ENCODE measurements at regions of chr4 and their contacts with region 1.

Region 1: DNA sequence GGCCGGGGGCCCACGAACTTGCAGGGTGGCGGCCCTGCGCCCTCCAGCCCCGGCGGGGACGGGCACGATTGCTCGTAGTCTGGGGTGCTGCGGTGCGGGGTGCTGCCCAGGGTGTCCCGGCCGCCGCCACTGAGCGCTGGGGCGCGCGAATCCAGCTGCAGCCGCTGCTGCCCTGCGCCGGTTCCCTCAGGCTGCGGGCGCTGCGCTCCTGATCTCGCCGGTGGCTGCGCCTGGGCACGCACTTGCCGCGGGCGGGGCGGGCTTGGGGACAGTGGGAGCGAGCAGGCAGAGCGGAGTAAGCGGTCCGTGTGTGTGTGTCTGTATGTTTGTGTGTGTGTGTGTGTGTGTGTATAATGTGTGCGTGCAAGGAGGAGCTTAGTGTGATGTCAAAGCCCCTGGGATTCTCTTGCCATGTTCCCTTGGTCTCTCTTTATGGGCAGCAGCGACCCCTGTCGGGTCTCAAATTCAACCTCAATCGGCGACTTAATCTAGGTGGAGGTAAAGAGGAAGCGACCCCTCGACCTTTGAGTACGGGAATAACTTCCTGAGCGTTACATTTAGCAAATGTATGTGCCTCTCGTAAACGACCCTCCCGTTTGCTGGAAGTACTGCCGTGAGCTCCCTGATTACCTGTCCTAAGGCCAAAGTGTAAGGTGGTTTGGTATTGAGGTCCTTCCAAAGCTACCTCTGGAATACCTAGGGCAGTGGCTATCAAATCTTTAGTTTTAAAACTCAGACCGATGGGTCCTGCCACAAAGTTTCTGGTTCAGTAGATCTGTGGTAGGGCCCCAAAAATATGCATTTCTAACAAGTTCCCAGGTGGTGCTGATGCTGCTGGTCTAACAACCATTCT is at the start of gene RNF150:
- DNase-seq: peak; percentile 67 to 86
- H3K4me3 ChIP-seq: peak within 1 kb of the TSS; percentile 70 to 71
- H3K27ac ChIP-seq: peak within 1 kb of the TSS; percentile 70 to 74
- H3K4me1 ChIP-seq: peaks cover 0 to 34% (median 4%) of the 10 kb centered on the region in 4 donors
- H3K27me3 ChIP-seq: no peaks in the 10 kb centered on the region
- CTCF ChIP-seq: peak; percentile 69 to 77

Region 2: DNA sequence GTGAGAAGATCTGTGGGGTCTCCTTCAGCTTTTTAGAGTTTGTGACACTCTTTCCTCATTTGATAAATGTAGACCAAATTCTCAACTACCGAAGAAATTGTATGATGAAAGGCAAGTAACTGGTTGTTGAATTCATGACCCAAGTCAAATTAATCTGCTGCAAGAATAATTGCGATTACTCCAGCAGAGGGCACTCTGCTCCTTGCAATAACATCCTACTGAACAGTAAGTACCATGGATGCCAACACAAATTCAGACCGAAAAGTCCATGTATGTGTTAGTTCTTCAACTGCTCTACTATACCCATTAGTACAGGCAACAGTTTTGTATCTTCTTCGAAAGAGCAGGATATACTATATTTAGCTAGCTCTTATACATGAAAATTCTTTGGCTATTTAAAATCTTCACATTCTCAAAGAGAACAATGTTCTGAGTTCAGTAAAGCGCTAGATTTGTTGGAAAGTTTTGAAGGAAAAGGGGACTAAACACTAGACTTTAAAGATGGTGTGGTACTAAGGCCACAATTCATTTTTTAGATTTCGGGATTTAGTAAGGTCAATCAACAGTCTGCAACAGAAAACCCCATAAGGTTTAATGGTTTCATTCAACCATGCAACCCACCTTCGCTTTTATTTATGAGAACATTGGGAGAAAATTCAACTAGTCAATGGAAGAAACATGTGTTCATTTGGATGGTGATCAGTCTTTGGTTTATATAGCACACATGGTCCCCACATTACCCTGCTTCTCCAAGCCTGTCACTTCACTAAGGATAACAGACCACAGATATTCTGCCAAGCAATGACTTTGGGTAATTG is 271.8 kb before region 1 on chr4:
- intact Hi-C with region 1: loop called (anchors 2 kb)
- DNase-seq: peak; percentile 72 to 76
- H3K4me3 ChIP-seq: no peak overlapping the region
- H3K27ac ChIP-seq: no peak overlapping the region
- H3K4me1 ChIP-seq: peaks cover 0 to 4% (median 2%) of the 10 kb centered on the region in 4 donors
- H3K27me3 ChIP-seq: no peaks in the 10 kb centered on the region
- CTCF ChIP-seq: peak; percentile 72 to 88

Region 3: GRCh38 chr4:141002323-141002805 is 131.0 kb before region 1 on chr4:
- intact Hi-C with region 1: loop called (anchors 5 kb)
- DNase-seq: no peak
- H3K4me3 ChIP-seq: no peak overlapping the region
- H3K27ac ChIP-seq: peak overlapping the region; percentile 54 to 58
- H3K4me1 ChIP-seq: peaks cover 0 to 61% (median 14%) of the 10 kb centered on the region in 4 donors
- H3K27me3 ChIP-seq: no peaks in the 10 kb centered on the region
- CTCF ChIP-seq: no peak

Region 4: GRCh38 chr4:141319863-141320262 is 186.5 kb after region 1 on chr4:
- intact Hi-C with region 1: no loop called
- DNase-seq: no peak
- H3K4me3 ChIP-seq: no peak overlapping the region
- H3K27ac ChIP-seq: no peak overlapping the region
- H3K4me1 ChIP-seq: no peaks in the 10 kb centered on the region
- H3K27me3 ChIP-seq: no peaks in the 10 kb centered on the region
- CTCF ChIP-seq: no peak